ENCODE measurements at regions of chr10 and their contacts with region 1.

Region 1: DNA sequence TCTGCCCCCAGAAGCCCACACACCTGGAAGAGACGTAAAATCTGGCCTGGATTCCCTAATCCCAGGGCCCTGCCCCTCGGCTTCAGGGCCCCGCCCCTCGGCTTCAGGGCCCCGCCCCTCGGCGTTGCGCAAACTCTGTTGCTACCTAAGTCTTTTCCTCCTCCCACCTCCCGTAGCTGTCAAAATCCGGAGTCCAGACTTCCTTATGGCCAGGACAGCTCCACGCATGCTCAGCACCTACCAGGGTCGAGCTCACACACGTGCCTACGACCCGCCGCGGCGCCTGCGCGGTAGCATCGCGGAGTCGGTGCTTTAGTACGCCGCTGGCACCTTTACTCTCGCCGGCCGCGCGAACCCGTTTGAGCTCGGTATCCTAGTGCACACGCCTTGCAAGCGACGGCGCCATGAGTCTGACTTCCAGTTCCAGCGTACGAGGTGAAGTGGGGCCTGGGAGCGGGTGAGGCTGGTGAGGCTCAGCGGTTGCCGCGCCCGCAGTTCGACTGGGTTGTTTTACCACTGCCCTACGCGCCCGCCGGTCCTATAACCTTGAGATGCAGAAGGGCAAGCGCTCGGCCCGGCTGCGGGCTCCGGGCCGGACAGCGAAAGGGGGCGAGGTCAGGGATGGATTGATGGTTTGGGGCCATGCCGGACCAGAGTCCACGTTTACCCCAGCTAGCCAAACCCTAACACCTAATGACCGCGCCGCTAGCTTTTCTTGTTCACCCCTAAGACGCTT is at the start of gene CISD1:
- DNase-seq: peak; percentile 84 to 100 (median 92)
- ATAC-seq: peak; percentile 59
- H3K4me3 ChIP-seq: peak within 1 kb of the TSS; percentile 78 to 84
- H3K4me3 Mint-ChIP-seq: peak within 1 kb of the TSS; percentile 97
- H3K27ac ChIP-seq: peak within 1 kb of the TSS; percentile 86
- H3K27ac Mint-ChIP-seq: peak within 1 kb of the TSS; percentile 97
- H3K4me1 ChIP-seq: peaks cover 30% of the 10 kb centered on the region
- H3K4me1 Mint-ChIP-seq: peaks cover 52% of the 10 kb centered on the region
- H3K27me3 ChIP-seq: no peaks in the 10 kb centered on the region
- H3K27me3 Mint-ChIP-seq: no peaks in the 10 kb centered on the region
- CTCF ChIP-seq: no peak
- total RNA-seq, gene CISD1: 2.8 to 3.2 TPM

Region 2: GRCh38 chr10:56360967-56361612 is 1907.9 kb before region 1 on chr10 and contains the start of gene ZWINT:
- CTCF ChIA-PET with region 1: no interaction called
- POLR2A ChIA-PET with region 1: no interaction called
- intact Hi-C with region 1: loop called in 1 of 2 experiments (anchors 5 kb)
- DNase-seq: peak; percentile 86 to 95 (median 90)
- ATAC-seq: peak; percentile 97
- H3K4me3 ChIP-seq: peak within 1 kb of the TSS; percentile 69 to 77
- H3K4me3 Mint-ChIP-seq: peak within 1 kb of the TSS; percentile 94
- H3K27ac ChIP-seq: peak within 1 kb of the TSS; percentile 38 to 51
- H3K27ac Mint-ChIP-seq: peak within 1 kb of the TSS; percentile 83
- H3K4me1 ChIP-seq: peaks cover 7% of the 10 kb centered on the region
- H3K4me1 Mint-ChIP-seq: peaks cover 26% of the 10 kb centered on the region
- H3K27me3 ChIP-seq: no peaks in the 10 kb centered on the region
- H3K27me3 Mint-ChIP-seq: no peaks in the 10 kb centered on the region
- CTCF ChIP-seq: no peak
- total RNA-seq, gene ZWINT: 2.2 to 2.5 TPM

Region 3: DNA sequence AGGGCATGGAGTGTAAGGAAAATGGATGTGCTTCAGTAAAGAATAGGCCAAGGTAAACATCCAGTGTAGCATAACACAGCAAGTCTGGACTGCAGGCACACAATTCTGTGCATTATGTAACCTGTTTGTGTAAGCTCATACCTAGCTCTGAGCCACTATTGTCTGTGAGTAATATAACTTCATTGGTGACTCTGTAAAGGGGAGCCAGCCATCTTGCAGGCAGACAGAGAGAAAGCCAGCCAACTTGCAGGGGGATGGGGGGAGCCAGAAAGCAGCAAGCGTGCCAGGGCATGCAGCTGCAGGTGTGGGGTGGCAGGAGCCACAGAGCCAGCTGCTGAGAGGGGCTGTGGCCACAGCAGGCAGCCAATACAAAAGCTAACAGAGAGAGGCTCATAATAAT is 450.5 kb before region 1 on chr10:
- CTCF ChIA-PET with region 1: no interaction called
- POLR2A ChIA-PET with region 1: no interaction called
- intact Hi-C with region 1: no loop called
- DNase-seq: no peak
- ATAC-seq: no peak
- H3K4me3 ChIP-seq: no peak overlapping the region
- H3K4me3 Mint-ChIP-seq: no peak overlapping the region
- H3K27ac ChIP-seq: no peak overlapping the region
- H3K27ac Mint-ChIP-seq: no peak overlapping the region
- H3K4me1 ChIP-seq: no peaks in the 10 kb centered on the region
- H3K4me1 Mint-ChIP-seq: no peaks in the 10 kb centered on the region
- H3K27me3 ChIP-seq: no peaks in the 10 kb centered on the region
- H3K27me3 Mint-ChIP-seq: no peaks in the 10 kb centered on the region
- CTCF ChIP-seq: no peak

Region 4: DNA sequence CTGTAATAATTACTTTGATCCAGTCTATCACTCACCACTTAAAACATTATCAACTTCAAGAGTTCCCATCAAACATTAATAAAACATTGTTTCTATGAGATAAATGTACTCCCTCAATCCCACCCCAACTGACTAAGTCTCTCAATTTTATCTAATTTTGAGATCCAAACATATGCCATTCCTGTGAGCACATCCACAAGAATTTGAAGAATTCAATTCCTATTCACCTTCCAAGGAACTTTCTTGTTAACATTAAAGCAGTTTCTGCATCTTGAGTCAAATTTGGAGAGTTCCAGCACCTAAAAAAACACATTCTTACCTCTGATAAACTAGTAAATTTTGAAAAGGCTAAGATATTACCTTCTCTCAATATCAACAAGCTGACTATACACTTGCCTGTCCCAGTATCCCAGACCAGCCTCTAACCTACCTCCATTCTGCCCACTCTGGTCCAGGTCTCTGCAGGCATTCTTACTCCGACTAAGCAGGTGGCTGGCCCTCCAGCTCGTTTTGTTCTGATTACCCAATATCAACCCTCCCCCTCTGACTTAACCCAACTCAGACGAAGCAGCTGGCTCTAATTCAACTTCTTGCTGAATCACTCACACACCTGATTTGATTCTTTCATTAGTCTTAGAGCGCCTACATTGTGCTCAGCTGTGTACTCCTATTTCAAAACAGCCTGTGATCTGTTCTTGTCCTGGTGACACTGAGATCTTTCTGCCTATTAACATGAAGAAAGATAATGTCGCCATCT is 276.5 kb before region 1 on chr10:
- CTCF ChIA-PET with region 1: no interaction called
- POLR2A ChIA-PET with region 1: no interaction called
- intact Hi-C with region 1: no loop called
- DNase-seq: no peak
- ATAC-seq: no peak
- H3K4me3 ChIP-seq: no peak overlapping the region
- H3K4me3 Mint-ChIP-seq: no peak overlapping the region
- H3K27ac ChIP-seq: no peak overlapping the region
- H3K27ac Mint-ChIP-seq: no peak overlapping the region
- H3K4me1 ChIP-seq: no peaks in the 10 kb centered on the region
- H3K4me1 Mint-ChIP-seq: no peaks in the 10 kb centered on the region
- H3K27me3 ChIP-seq: no peaks in the 10 kb centered on the region
- H3K27me3 Mint-ChIP-seq: no peaks in the 10 kb centered on the region
- CTCF ChIP-seq: no peak

Region 5: DNA sequence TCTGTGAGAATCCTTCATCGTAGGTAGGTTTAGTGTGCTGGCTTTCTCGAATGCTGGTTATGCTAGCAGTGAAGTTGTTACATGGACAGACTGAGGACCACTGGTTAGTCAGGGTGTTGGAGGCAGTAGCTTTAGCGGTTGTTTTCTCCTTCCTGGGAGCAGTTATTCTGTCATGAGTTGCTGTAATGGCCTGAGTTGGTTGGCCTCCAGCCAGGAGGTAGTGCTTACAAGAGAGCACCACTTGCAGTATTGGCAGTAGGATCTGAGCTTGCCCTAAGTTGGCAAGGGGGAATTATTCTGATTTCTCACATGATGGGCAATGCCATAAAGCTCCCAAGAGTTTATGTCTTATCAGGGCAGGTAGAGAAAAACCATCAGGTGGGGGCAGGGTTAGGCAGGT is 59.4 kb before region 1 on chr10:
- CTCF ChIA-PET with region 1: interaction called, 3 read pairs
- POLR2A ChIA-PET with region 1: interaction called, 6 read pairs
- intact Hi-C with region 1: loop called in 1 of 2 experiments (anchors 10 kb)
- DNase-seq: no peak
- ATAC-seq: no peak
- H3K4me3 ChIP-seq: no peak overlapping the region
- H3K4me3 Mint-ChIP-seq: no peak overlapping the region
- H3K27ac ChIP-seq: no peak overlapping the region
- H3K27ac Mint-ChIP-seq: no peak overlapping the region
- H3K4me1 ChIP-seq: peaks cover 15% of the 10 kb centered on the region
- H3K4me1 Mint-ChIP-seq: peaks cover 24% of the 10 kb centered on the region
- H3K27me3 ChIP-seq: no peaks in the 10 kb centered on the region
- H3K27me3 Mint-ChIP-seq: no peaks in the 10 kb centered on the region
- CTCF ChIP-seq: no peak

Region 6: GRCh38 chr10:58237014-58237830 is 31.8 kb before region 1 on chr10:
- CTCF ChIA-PET with region 1: no interaction called
- POLR2A ChIA-PET with region 1: no interaction called
- intact Hi-C with region 1: loop called in 1 of 2 experiments (anchors 2 kb)
- DNase-seq: no peak
- ATAC-seq: no peak
- H3K4me3 ChIP-seq: no peak overlapping the region
- H3K4me3 Mint-ChIP-seq: no peak overlapping the region
- H3K27ac ChIP-seq: no peak overlapping the region
- H3K27ac Mint-ChIP-seq: no peak overlapping the region
- H3K4me1 ChIP-seq: peaks cover 15% of the 10 kb centered on the region
- H3K4me1 Mint-ChIP-seq: peaks cover 40% of the 10 kb centered on the region
- H3K27me3 ChIP-seq: no peaks in the 10 kb centered on the region
- H3K27me3 Mint-ChIP-seq: no peaks in the 10 kb centered on the region
- CTCF ChIP-seq: no peak

Region 7: GRCh38 chr10:58254644-58255043 is 14.4 kb before region 1 on chr10:
- CTCF ChIA-PET with region 1: no interaction called
- POLR2A ChIA-PET with region 1: no interaction called
- intact Hi-C with region 1: no loop called
- DNase-seq: no peak
- ATAC-seq: no peak
- H3K4me3 ChIP-seq: no peak overlapping the region
- H3K4me3 Mint-ChIP-seq: no peak overlapping the region
- H3K27ac ChIP-seq: no peak overlapping the region
- H3K27ac Mint-ChIP-seq: no peak overlapping the region
- H3K4me1 ChIP-seq: no peaks in the 10 kb centered on the region
- H3K4me1 Mint-ChIP-seq: peaks cover 27% of the 10 kb centered on the region
- H3K27me3 ChIP-seq: no peaks in the 10 kb centered on the region
- H3K27me3 Mint-ChIP-seq: no peaks in the 10 kb centered on the region
- CTCF ChIP-seq: no peak

Region 8: DNA sequence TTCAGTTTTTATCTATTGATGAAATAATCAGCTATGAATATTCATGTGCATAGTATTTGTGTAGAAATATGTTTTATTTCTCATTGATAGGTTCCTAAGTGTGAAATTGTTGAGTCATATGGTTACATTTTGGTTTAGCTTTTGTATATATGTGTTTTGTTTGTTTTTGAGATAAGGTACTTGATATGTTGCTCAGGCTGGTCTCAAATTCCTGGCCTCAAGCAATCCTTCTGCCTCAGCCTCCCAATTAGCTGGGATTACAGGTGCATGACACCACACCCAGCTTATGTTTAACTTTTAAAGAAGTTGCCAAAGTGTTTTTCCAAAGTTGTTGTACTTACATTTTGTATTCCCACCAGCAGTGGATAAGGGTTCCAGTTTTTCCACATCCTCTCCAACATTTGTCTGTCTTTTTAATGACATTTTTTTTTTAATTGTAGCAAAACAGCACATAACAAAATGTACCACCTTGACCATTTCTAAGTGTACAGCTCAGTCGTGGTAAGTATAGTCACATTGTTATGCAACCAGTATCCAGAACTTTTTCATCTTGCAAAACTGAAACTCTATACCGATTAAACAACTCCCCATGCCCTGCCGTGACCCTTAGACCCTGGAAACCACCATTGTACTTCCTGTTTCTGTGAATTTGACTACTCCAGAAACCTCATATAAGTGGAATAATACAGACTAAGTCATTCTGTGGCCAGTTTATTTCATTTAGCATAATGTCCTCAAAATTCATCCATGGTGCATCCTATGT is 53.2 kb after region 1 on chr10:
- CTCF ChIA-PET with region 1: no interaction called
- POLR2A ChIA-PET with region 1: no interaction called
- intact Hi-C with region 1: no loop called
- DNase-seq: peak in 2 of 9 experiments; percentile 12 to 49
- ATAC-seq: no peak
- H3K4me3 ChIP-seq: no peak overlapping the region
- H3K4me3 Mint-ChIP-seq: no peak overlapping the region
- H3K27ac ChIP-seq: no peak overlapping the region
- H3K27ac Mint-ChIP-seq: no peak overlapping the region
- H3K4me1 ChIP-seq: peaks cover 7% of the 10 kb centered on the region
- H3K4me1 Mint-ChIP-seq: peaks cover 12% of the 10 kb centered on the region
- H3K27me3 ChIP-seq: no peaks in the 10 kb centered on the region
- H3K27me3 Mint-ChIP-seq: peaks cover 3% of the 10 kb centered on the region
- CTCF ChIP-seq: no peak

Region 9: DNA sequence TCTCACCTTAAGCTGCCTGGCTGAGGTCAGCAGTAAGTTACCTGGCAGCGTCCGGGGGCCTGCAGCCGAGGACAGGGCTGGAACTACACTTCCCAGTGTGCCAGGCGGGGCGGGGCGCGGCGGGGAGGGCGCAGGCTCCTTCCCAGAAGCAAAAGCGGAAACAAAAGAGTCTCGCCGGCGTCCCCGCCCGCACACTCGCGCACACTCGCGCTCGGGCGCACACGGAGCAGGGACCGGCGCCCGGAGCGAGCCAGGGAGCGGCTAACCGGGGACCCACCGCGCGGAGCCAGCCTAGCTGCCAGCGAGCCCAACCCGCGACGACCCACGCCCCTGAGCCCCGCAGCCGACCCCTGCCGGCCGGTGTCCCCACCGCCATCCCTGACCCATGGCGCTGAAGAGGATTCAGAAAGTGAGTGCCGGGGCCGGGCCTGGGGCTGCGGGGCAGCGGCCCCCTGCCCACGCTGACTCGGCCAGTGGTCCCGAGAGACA is 65.8 kb after region 1 on chr10 and contains the start of gene UBE2D1:
- CTCF ChIA-PET with region 1: no interaction called
- POLR2A ChIA-PET with region 1: interaction called, 8 read pairs
- intact Hi-C with region 1: loop called (anchors 1 to 2 kb)
- DNase-seq: peak; percentile 55 to 89 (median 82)
- ATAC-seq: peak; percentile 97
- H3K4me3 ChIP-seq: peak within 1 kb of the TSS; percentile 65 to 87
- H3K4me3 Mint-ChIP-seq: peak within 1 kb of the TSS; percentile 91
- H3K27ac ChIP-seq: peak within 1 kb of the TSS; percentile 34 to 65
- H3K27ac Mint-ChIP-seq: peak within 1 kb of the TSS; percentile 88
- H3K4me1 ChIP-seq: peaks cover 22% of the 10 kb centered on the region
- H3K4me1 Mint-ChIP-seq: peaks cover 38% of the 10 kb centered on the region
- H3K27me3 ChIP-seq: no peaks in the 10 kb centered on the region
- H3K27me3 Mint-ChIP-seq: peaks cover 3% of the 10 kb centered on the region
- CTCF ChIP-seq: no peak
- total RNA-seq, gene UBE2D1: 8.8 to 9.4 TPM

Region 10: DNA sequence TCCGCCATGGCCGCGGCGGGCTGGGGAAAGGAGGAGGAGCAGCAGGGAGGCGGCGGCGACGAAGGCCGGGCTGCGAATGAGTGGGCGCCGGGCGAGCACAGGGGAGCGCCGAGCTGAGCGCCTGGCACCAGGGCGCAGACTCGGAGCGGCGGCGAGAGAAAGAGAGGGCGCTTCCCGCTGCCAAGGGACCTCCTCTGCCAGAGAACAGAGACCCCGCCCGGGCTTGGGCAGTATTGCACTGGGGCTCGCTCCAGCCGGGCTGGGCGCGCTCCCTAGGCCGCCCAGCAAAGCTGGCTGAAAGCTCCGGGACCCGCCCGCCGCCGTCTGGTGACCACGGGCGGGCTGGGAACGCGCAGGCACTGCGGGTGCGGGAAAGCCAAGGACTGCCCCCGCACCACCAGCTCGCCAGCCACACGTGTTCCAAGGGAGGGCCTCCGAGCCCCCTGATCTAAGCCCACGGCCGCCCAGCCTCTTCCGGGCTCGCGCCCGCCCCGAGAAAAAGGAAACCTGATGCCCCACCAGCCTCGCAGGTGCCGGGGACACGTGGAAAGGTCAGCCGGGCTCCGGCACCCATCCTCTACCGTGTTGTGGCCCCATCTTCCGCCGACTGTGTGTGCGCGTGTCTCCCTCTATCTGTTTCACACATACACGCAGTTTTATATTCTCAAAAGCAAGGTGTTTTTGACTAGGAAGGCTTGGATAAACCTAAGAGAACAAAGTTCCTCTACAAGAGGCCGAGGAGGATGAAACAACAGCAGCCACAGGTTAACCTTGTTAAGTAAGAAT is 1637.6 kb after region 1 on chr10 and contains the start of gene CCDC6:
- CTCF ChIA-PET with region 1: no interaction called
- POLR2A ChIA-PET with region 1: no interaction called
- intact Hi-C with region 1: loop called in 1 of 2 experiments (anchors 2 kb)
- DNase-seq: peak; percentile 87 to 96 (median 94)
- ATAC-seq: peak; percentile 89
- H3K4me3 ChIP-seq: peak within 1 kb of the TSS; percentile 80 to 84
- H3K4me3 Mint-ChIP-seq: peak within 1 kb of the TSS; percentile 95
- H3K27ac ChIP-seq: peak within 1 kb of the TSS; percentile 77 to 80
- H3K27ac Mint-ChIP-seq: peak within 1 kb of the TSS; percentile 97
- H3K4me1 ChIP-seq: peaks cover 41% of the 10 kb centered on the region
- H3K4me1 Mint-ChIP-seq: peaks cover 62% of the 10 kb centered on the region
- H3K27me3 ChIP-seq: no peaks in the 10 kb centered on the region
- H3K27me3 Mint-ChIP-seq: no peaks in the 10 kb centered on the region
- CTCF ChIP-seq: peak; percentile 80
- total RNA-seq, gene CCDC6: 21.6 to 23.7 TPM